Right ventricle myocardium superior (tissue), 1 donor: ENCODE measurements at regions of chrX and their contacts with region 1.

Region 1: GRCh38 chrX:68807818-68808217 is 21.0 kb upstream of the EFNB1 start:
- DNase-seq: no peak
- ATAC-seq: peak; percentile 72

Region 2: DNA sequence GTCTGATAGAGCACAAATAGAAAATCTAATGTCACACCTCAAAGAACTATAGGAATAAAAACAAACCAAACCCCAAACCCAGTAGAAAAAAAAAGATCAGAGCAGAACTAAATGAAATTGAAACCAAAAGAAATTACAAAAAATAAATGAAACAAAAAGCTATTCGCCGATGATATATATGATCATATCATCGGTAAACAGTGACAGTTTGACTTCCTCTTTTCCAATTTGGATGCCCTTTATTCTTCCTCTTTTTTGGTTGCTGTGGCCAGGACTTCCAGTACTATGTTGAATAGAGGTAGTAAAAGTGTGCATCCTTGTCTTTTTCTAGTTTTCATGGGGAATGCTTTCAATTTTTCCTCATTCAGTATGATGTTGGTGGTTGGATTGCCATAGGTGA is 1479.3 kb before region 1 on chrX:
- intact Hi-C with region 1: no loop called
- DNase-seq: no peak
- ATAC-seq: no peak

Region 3: DNA sequence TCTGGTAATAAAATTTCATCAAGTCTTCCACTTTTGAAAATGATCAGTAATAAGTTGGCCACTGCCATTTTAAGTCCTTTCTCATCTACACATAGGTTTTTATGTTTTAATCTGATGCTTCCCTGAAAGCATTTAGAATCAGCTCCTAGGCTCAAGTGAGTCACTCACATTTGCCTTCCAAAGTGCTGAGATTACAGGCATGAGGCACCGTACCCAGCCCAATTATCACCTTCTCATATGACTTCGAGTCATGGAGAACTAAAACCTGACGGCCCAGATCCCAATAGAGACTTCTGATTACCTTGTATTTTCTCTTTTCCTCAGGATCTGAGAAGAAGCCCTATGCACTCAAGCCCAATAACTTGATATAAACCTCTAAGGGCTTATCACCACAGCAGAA is 515.3 kb before region 1 on chrX:
- intact Hi-C with region 1: no loop called
- DNase-seq: no peak
- ATAC-seq: no peak

Region 4: DNA sequence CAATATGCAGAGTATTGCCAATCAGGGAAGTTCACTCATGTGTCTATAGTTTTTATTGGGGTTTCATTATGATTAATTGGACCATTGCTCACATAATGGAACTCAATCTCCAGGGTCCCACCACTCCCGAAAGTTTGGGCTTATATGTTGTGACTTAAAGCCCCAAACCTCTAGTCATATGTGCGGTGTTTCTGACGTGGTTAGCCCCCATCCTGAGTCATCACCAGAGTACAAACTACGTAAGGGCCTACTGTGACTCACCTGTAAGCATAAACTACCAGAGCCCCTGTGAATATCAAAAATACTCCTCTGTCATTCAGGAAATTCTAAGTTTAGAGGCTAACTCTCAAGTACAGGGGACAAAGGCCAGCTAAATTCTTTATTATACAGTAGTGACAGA is 303.6 kb before region 1 on chrX:
- intact Hi-C with region 1: loop called (anchors 10 kb)
- DNase-seq: no peak
- ATAC-seq: no peak

Region 5: GRCh38 chrX:68732906-68733493 is 74.8 kb before region 1 on chrX:
- intact Hi-C with region 1: loop called (anchors 2 kb)
- DNase-seq: peak; percentile 78
- ATAC-seq: peak; percentile 85